Endothelial cell of umbilical vein (primary cell): ENCODE measurements at regions of chr13 and their contacts with region 1.

Region 1: GRCh38 chr13:44758630-44759383 is 182.7 kb upstream of the TSC22D1 start:
- DNase-seq: peak; percentile 85
- H3K4me3 ChIP-seq: no peak overlapping the region
- H3K27ac ChIP-seq: peak overlapping the region; percentile 85
- H3K4me1 ChIP-seq: peaks cover 53% of the 10 kb centered on the region
- H3K27me3 ChIP-seq: no peaks in the 10 kb centered on the region
- CTCF ChIP-seq: no peak
- POLR2A ChIP-seq: no peak

Region 2: DNA sequence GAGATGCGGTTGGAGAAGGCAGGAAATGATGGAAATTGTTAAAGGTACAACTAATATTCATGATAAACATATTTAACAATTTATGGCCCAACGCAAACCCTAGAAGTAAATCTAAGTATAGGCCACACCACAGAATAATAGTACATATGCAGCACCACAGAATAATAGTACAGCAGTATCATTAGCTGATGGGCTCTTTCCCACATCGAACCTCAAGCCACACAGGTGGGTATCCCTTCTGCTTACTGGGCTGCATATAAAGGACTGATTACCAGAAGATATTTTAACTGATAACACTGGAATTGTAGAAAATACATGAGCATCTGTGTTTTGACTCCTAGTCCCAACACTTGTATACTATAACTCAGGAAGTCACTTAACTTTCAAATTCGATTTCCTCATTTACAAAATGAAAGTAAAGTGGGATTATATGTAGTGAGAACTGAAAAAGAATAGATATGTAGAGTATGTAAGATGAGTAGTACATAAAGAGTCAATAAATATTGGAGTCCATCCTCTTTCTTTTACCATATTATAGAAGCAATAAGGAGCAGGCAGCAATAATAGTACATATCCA is 274.2 kb before region 1 on chr13:
- CTCF ChIA-PET with region 1: interaction called, 3 read pairs
- POLR2A ChIA-PET with region 1: no interaction called
- dilution Hi-C with region 1: no loop called
- intact Hi-C with region 1: loop called (anchors 5 kb)
- DNase-seq: peak; percentile 9
- H3K4me3 ChIP-seq: no peak overlapping the region
- H3K27ac ChIP-seq: no peak overlapping the region
- H3K4me1 ChIP-seq: peaks cover 10% of the 10 kb centered on the region
- H3K27me3 ChIP-seq: no peaks in the 10 kb centered on the region
- CTCF ChIP-seq: no peak
- POLR2A ChIP-seq: no peak

Region 3: GRCh38 chr13:44801990-44802389 is 43.2 kb after region 1 on chr13:
- CTCF ChIA-PET with region 1: interaction called, 3 read pairs
- POLR2A ChIA-PET with region 1: no interaction called
- dilution Hi-C with region 1: no loop called
- intact Hi-C with region 1: loop called (anchors 2 kb)
- DNase-seq: peak; percentile 92
- H3K4me3 ChIP-seq: no peak overlapping the region
- H3K27ac ChIP-seq: no peak overlapping the region
- H3K4me1 ChIP-seq: peaks cover 20% of the 10 kb centered on the region
- H3K27me3 ChIP-seq: no peaks in the 10 kb centered on the region
- CTCF ChIP-seq: no peak
- POLR2A ChIP-seq: no peak

Region 4: GRCh38 chr13:44843403-44843802 is 84.6 kb after region 1 on chr13:
- CTCF ChIA-PET with region 1: no interaction called
- POLR2A ChIA-PET with region 1: no interaction called
- dilution Hi-C with region 1: no loop called
- intact Hi-C with region 1: loop called (anchors 2 kb)
- DNase-seq: no peak
- H3K4me3 ChIP-seq: no peak overlapping the region
- H3K27ac ChIP-seq: no peak overlapping the region
- H3K4me1 ChIP-seq: peaks cover 38% of the 10 kb centered on the region
- H3K27me3 ChIP-seq: no peaks in the 10 kb centered on the region
- CTCF ChIP-seq: no peak
- POLR2A ChIP-seq: no peak

Region 5: DNA sequence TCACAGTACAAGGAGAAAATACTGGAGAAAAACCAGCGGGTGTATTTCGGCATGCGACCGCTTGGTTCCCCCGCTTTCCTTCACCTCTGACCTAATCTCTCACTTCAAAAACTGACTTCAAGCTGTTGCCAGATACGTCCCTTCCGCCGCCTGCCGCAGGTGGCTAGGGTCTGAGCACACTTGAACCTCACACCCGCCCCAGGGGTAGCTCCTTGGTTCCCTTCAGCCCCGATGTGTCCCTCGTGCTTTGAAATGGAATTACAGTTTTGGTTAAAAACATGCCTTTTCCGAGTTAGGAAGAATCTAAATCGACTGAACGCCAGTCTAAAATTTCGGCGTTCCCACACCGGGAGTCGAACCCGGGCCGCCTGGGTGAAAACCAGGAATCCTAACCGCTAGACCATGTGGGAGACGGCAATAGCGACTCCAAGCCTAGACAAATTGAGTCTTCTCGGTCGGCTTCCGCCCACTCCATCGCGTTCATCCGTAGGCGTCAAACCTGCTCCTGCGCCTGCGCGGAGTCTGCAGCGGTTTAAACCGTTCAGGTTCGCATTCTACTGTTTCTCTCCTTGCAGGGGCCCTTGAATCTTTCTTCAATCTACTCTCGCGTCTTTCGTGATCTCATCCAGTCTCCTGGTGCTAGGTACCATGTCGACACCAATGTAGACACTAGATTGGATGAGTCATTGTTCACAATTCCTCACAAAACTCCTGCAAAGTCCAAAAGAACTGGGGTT is 158.9 kb after region 1 on chr13:
- CTCF ChIA-PET with region 1: interaction called, 5 read pairs
- POLR2A ChIA-PET with region 1: no interaction called
- dilution Hi-C with region 1: no loop called
- intact Hi-C with region 1: loop called (anchors 5 kb)
- DNase-seq: peak; percentile 98
- H3K4me3 ChIP-seq: peak overlapping the region; percentile 4 to 66 (median 38)
- H3K27ac ChIP-seq: peak overlapping the region; percentile 95
- H3K4me1 ChIP-seq: peaks cover 29% of the 10 kb centered on the region
- H3K27me3 ChIP-seq: no peaks in the 10 kb centered on the region
- CTCF ChIP-seq: peak; percentile 38 to 42
- POLR2A ChIP-seq: no peak

Region 6: DNA sequence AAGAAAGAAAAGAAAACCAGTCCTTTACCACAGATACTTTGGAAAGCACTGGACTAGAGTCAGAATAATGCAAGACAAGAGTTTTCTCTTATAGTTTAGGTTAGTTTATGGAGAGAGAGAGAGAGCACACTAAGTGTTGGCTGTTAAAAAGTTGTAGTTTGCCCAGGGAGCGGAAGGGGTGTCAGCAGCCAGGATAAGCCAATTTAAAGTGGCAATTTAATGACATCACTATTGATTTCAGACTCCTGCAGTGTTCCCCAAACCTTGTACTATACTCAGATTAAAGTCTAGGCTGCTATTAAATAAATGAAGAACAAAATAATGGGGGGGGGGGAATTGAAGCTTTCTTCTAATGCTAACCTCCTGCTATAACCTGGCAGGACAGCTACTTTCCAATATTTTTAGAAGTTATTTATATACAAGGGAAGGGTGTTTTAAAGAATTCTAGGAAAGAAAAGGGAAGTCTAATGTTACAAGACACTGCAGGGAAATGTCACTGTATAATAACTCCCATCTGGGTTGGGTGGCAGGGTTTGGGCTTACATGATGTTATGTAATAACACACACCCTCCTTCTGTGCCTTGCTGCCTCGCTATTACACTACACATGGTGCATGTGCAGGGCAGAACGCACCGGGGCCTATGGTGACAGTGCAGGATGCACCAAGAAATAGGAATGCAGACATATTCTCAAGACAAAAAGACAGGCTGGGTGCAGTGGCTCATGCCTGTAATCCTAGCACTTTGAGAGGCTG is 562.2 kb after region 1 on chr13:
- CTCF ChIA-PET with region 1: no interaction called
- POLR2A ChIA-PET with region 1: no interaction called
- dilution Hi-C with region 1: no loop called
- intact Hi-C with region 1: no loop called
- DNase-seq: no peak
- H3K4me3 ChIP-seq: no peak overlapping the region
- H3K27ac ChIP-seq: no peak overlapping the region
- H3K4me1 ChIP-seq: peaks cover 11% of the 10 kb centered on the region
- H3K27me3 ChIP-seq: no peaks in the 10 kb centered on the region
- CTCF ChIP-seq: no peak
- POLR2A ChIP-seq: no peak